OCI-LY7 (cell line): ENCODE measurements at regions of chr17 and their contacts with region 1.

Region 1: DNA sequence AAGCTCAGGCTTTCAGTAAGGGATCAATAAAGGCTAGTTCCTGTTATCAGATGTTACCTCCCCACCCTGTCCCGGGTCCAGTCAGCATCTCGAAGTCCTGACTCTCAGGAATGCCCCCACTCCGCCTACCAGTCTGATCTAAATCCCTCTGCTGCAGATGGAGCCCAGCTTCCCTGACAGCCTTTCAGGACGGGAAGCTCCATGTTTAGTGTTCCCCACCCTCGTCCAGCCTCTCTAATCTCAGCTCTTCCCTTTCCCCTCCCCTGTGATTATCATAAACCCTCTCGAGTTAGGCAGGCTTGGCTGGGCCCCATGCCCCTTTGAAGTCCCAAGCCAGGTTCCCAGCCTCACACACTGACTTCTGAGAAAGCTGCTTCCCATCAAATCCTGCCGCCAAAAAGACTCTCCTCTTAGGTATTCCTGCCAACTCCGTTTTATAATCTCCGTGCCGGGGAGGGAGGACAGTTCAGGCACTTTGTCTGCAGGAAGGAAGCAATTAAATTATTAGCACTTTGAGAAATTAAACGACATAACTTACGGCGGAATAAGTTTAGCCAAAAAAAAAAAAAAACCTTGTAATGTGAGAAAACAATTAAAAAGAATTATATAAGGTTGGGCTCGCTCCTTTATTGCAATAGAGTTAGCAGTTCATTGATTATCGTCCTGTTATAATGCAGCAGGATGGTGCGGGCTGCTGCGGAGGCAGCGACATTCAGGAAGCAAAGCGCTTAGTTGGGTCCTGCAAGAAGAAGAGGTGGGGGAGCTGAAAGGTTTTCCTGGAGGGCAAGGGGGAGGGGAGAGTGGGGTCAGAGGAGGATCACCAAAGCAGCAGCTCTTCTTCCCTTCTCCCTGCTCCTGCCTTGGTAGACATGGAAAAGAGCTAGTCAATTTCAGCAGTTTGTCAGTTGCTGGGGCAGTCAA is 16.8 kb upstream of the ETV4 start:
- DNase-seq: no peak
- H3K4me3 ChIP-seq: no peak overlapping the region
- H3K27ac ChIP-seq: no peak overlapping the region
- H3K4me1 ChIP-seq: no peaks in the 10 kb centered on the region
- CTCF ChIP-seq: no peak

Region 2: GRCh38 chr17:43490621-43491020 is 72.3 kb before region 1 on chr17:
- CTCF ChIA-PET with region 1: no interaction called
- POLR2A ChIA-PET with region 1: interaction called, 10 read pairs
- intact Hi-C with region 1: no loop called
- DNase-seq: no peak
- H3K4me3 ChIP-seq: no peak overlapping the region
- H3K27ac ChIP-seq: no peak overlapping the region
- H3K4me1 ChIP-seq: peaks cover 5% of the 10 kb centered on the region
- CTCF ChIP-seq: no peak